ENCODE measurements at regions of chr10 and their contacts with region 1.

Region 1: DNA sequence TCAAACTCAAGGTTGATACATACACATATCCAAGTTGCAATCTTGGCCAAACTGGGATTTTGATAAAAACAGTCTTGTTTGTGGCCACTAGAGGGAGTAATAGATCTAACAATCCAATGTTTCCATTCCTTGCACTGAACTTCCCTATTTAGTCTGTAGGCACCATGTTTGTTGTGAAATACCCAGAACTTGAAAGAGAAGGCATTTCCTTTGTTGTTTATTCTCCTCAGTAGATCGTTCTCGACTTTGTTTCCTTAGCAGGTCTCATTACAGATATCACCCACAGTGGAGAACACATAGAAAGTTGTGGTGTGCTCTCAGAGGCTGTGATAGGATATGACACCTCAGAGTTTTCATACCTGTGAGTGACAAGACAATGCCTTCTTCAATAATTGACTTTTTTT is 70.3 kb upstream of the MXI1 start:
- DNase-seq: peak; percentile 74
- H3K4me3 Mint-ChIP-seq: no peak overlapping the region
- H3K27ac Mint-ChIP-seq: peak overlapping the region; percentile 58
- H3K4me1 Mint-ChIP-seq: peaks cover 14% of the 10 kb centered on the region
- H3K27me3 Mint-ChIP-seq: no peaks in the 10 kb centered on the region
- CTCF ChIP-seq: peak; percentile 64

Region 2: GRCh38 chr10:109977382-109977806 is 159.8 kb before region 1 on chr10:
- CTCF ChIA-PET with region 1: no interaction called
- POLR2A ChIA-PET with region 1: no interaction called
- intact Hi-C with region 1: no loop called
- DNase-seq: no peak
- H3K4me3 Mint-ChIP-seq: no peak overlapping the region
- H3K27ac Mint-ChIP-seq: no peak overlapping the region
- H3K4me1 Mint-ChIP-seq: no peaks in the 10 kb centered on the region
- H3K27me3 Mint-ChIP-seq: no peaks in the 10 kb centered on the region
- CTCF ChIP-seq: no peak

Region 3: GRCh38 chr10:110151467-110151866 is 14.3 kb after region 1 on chr10:
- CTCF ChIA-PET with region 1: interaction called, 10 read pairs
- POLR2A ChIA-PET with region 1: interaction called, 5 read pairs
- intact Hi-C with region 1: no loop called
- DNase-seq: peak; percentile 84
- H3K4me3 Mint-ChIP-seq: no peak overlapping the region
- H3K27ac Mint-ChIP-seq: no peak overlapping the region
- H3K4me1 Mint-ChIP-seq: peaks cover 7% of the 10 kb centered on the region
- H3K27me3 Mint-ChIP-seq: no peaks in the 10 kb centered on the region
- CTCF ChIP-seq: no peak

Region 4: GRCh38 chr10:110225756-110226542 is 88.8 kb after region 1 on chr10:
- CTCF ChIA-PET with region 1: interaction called, 120 read pairs
- POLR2A ChIA-PET with region 1: interaction called, 12 read pairs
- intact Hi-C with region 1: loop called (anchors 1 kb)
- DNase-seq: peak; percentile 92
- H3K4me3 Mint-ChIP-seq: peak overlapping the region; percentile 81
- H3K27ac Mint-ChIP-seq: peak overlapping the region; percentile 67
- H3K4me1 Mint-ChIP-seq: peaks cover 33% of the 10 kb centered on the region
- H3K27me3 Mint-ChIP-seq: no peaks in the 10 kb centered on the region
- CTCF ChIP-seq: peak; percentile 63

Region 5: GRCh38 chr10:110279407-110279986 is 142.4 kb after region 1 on chr10:
- CTCF ChIA-PET with region 1: interaction called, 62 read pairs
- POLR2A ChIA-PET with region 1: interaction called, 12 read pairs
- intact Hi-C with region 1: loop called (anchors 1 kb)
- DNase-seq: peak; percentile 71
- H3K4me3 Mint-ChIP-seq: no peak overlapping the region
- H3K27ac Mint-ChIP-seq: no peak overlapping the region
- H3K4me1 Mint-ChIP-seq: no peaks in the 10 kb centered on the region
- H3K27me3 Mint-ChIP-seq: no peaks in the 10 kb centered on the region
- CTCF ChIP-seq: peak; percentile 80

Region 6: DNA sequence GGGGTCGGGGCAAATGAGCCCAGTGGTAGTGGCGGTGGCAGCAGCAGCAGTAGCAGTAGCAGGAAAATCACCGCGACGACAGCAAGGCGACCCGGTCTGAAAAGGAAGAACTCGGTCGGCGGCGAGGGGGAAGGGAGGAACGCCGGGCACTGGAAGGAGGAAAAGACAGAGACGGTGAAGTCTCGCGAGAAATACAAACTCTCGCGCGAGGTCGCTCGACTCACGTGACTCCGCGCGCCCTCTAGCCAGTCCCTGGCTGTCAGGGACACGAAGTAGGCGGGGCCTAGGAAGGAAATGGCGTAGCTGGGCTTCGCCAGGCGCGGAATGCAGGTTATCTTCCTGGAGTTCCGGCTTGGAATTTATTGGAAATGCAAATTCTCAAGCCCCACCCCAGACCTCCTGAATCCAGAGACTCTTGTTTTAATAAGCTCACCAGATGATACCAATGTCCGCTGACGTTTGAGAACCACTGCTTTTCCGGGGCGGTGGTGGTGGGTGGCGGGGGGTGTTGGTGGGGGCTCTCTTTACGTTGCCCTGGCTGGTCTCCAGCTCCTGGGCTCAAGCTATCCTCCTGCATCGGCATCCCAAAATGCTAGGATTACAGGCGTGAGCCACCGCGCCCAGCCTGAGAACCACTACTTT is 167.8 kb after region 1 on chr10 and contains the start of gene SMNDC1:
- CTCF ChIA-PET with region 1: interaction called, 10 read pairs
- POLR2A ChIA-PET with region 1: interaction called, 5 read pairs
- intact Hi-C with region 1: no loop called
- DNase-seq: peak; percentile 98
- H3K4me3 Mint-ChIP-seq: peak within 1 kb of the TSS; percentile 94
- H3K27ac Mint-ChIP-seq: peak within 1 kb of the TSS; percentile 95
- H3K4me1 Mint-ChIP-seq: peaks cover 10% of the 10 kb centered on the region
- H3K27me3 Mint-ChIP-seq: no peaks in the 10 kb centered on the region
- CTCF ChIP-seq: no peak
- total RNA-seq, gene SMNDC1: 46.6 and 48.2 TPM in 2 replicates

Region 7: DNA sequence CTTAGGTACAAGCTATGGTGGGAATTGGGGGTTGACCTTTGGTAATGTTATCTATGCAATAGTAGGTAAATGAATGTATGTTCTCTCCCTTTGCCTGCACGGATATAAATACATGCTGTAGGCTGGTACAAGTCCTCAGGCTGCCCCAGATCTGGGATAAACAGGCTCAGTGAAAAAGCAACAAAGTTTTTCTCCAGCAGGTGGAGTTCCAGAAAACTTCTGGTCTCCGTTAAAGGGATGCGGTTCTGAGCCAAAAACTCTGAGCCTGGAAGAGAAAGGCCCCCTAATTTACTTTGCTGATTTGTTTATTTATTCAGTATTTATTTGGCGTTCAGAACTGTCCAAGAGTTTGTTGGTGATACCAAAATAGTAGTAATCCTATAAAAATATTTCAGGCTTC is 1144.4 kb after region 1 on chr10:
- CTCF ChIA-PET with region 1: no interaction called
- POLR2A ChIA-PET with region 1: no interaction called
- intact Hi-C with region 1: no loop called
- DNase-seq: peak; percentile 25
- H3K4me3 Mint-ChIP-seq: no peak overlapping the region
- H3K27ac Mint-ChIP-seq: no peak overlapping the region
- H3K4me1 Mint-ChIP-seq: no peaks in the 10 kb centered on the region
- H3K27me3 Mint-ChIP-seq: no peaks in the 10 kb centered on the region
- CTCF ChIP-seq: peak; percentile 29

Measured in MCF 10A (cell line).